KBM-7 (cell line): ENCODE measurements at regions of chr3 and their contacts with region 1.

Region 1: GRCh38 chr3:58532794-58533220 is 4.2 kb downstream of the ACOX2 start:
- DNase-seq: peak; percentile 85

Region 2: GRCh38 chr3:58177747-58178527 is 354.9 kb before region 1 on chr3:
- in situ Hi-C with region 1: loop called (anchors 25 kb)
- DNase-seq: peak; percentile 92

Region 3: DNA sequence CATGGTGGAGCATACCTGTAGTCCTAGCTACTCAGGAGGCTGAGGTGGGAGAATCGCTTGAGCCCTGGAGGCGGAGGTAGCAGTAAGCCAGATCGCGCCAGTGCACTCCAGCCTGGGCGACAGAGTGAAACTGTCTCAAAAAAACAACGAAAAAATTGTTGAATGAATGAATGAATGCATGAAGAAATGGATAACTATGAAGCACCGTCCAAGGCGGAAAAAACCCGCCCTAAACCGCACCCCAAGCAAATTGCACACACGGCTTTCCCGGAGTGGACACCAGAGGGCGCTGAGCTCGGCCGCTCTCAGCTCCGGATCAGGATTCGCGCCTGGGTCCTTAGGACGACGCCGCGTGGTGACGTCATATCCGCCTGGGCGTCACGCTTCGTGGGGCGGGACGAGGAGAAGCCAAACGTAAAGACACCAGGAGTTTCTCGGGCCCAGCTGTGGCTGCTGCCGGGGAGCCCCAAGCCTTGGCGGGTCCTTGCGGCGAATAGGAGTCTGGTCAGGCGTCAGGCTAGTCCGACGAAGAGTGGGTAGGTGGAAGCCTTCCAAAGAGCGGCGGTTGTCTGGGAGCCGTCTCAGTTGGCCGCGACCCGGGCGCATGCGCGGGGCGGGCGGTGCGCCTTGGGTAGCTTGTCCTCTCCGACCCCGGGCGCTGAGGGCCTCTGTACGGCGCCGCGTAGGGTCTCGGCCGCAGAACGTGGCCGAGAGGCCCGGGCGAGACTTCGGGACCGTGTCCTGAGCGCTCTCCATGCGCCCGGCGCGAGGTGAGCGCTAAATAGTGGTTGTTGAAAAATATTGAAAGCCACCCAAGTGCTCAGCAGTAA is 226.7 kb before region 1 on chr3 and contains the starts of genes HTD2 and RPP14:
- in situ Hi-C with region 1: loop called (anchors 25 kb)
- DNase-seq: peak; percentile 99

Region 4: DNA sequence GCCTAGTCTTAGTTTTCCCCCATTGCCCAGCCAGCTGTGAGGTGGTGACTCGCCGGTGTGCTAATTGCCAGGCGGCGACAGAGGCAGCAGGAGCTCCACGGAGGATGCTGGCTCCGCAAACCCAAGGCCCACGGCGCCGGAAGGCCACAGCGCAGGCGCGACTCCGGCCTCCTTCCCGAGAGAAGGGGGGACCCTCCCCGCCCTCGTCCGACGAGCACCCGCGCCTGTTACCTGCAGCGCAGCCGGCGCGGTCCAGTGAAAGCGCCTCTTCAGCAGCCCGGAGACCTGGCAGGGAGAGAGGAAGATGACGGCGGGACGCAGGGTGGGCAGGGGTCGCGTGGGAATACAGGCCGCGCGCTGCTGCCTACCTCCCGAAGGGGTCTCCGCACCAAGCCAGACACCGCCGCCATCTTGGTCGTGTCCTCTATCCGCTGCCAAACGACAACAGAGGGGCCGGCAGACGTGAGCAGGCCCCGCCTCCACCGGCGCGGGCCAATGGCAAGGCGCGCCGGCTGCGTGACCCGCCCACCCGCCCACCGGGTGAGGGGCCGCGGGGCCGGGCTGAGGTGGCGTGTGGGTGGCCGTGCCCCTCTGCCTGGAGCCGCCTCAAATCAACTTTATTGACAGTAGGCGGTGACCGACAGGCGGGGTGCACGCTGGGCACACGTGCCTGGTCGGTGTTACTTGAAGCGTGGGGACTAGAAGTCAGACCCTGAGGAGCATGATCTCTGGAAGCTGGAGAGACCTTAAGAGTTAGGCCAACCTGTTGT is 99.2 kb before region 1 on chr3 and contains the start of gene PDHB:
- in situ Hi-C with region 1: loop called (anchors 25 kb)
- DNase-seq: peak; percentile 92

Region 5: DNA sequence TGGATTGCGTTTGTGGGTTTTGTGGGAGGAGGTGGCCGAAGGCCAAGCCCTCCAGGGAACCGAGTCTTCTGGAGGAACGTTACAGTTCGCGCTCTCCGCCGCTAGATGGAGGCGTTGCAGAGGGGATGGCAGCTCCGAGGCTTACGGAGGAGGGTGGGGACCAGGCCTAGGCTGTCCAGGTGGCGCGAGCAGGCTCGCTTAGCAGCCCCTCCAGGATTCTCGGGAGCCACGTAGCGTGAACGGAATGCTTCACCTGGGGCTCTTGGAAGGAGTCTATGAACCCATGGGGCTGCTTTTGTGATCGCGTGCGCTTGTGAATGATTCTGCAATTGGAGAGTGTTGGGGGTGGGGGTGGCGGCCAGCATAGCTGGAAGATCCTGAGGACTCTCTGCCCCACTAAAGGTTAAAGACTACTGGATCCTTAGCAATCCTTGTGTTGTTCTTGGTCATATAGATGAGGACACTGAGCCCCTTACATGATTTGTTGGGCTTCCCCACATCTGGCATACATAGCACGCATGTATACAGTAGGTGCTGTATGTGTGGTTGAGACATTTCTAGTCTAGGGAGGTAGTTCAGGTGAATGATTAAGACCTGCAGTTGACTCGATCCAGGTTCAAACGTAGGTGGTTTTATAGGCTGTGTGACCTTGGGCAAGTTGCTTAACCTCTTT is 108.0 kb after region 1 on chr3:
- in situ Hi-C with region 1: no loop called
- DNase-seq: peak; percentile 61

Region 6: DNA sequence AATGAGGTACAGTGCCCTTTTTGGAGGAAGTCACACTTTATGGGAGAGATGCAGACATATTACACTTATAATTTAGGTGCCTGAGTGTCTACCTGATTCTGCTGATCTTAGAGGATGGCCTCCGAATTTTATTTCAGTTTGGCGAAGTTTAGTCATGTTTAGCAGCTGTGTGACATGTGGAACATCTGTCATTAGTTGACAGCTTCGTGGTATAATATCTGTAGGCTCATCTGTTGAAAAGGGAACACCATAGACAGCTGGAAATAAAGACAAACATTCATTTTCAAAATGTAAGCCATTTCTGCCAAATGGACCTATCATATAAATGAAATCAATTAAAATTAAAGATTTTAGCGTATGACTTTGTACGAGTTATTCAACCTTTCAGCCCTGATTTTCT is 351.6 kb after region 1 on chr3:
- in situ Hi-C with region 1: no loop called
- DNase-seq: no peak